ENCODE measurements at regions of chr1 and their contacts with region 1.

Region 1: DNA sequence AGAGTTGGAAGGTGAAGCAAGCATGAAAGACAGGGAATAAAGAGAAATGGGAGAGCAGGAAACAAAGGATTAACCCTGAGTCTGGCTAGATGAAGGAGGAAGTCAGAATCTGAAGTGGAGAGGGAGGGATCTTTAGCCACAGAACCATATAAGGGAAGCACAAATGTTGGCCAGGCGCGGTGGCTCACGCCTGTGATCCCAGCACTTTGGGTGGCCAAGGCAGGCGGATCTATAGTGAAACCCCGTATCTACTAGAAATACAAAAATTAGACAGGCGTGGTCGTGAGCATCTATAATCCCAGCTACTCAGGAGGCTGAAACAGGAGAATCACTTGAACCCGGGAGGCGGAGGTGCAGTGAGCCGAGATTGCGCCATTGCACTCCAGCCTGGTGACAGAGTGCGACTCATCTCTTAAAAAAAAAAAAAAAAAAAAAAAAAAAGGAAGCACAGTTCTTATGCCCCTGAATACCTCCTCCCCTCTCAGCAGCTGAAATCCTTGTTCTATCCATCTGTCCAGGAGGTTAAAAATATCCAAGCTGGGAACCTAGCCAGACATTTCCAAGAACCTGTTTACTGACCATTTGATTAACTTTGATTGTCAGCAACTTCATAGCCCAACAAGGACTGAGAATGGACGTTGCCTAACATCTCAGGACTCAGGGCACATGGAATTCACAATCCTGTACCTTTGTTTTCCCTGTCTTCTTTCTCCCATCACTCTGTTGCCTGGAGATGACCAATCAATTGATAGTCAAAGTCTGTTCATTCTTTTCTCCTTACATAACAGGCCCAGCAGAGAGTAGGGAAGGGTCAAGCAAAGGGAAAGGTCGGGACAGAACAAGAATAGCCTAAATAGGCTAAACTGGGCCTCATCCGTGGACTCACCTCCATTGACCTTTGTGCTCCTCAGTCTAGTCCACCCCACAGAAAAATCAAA is 10.6 kb downstream of the TXNIP start:
- DNase-seq: peak in 2 of 14 experiments; percentile 37 to 42
- ATAC-seq: no peak
- H3K4me3 ChIP-seq: no peak overlapping the region
- H3K4me3 Mint-ChIP-seq: peak overlapping the region; percentile 35
- H3K27ac ChIP-seq: peak overlapping the region; percentile 42 to 45
- H3K27ac Mint-ChIP-seq: no peak overlapping the region
- H3K4me1 ChIP-seq: peaks cover 83% of the 10 kb centered on the region
- H3K4me1 Mint-ChIP-seq: peaks cover 25% of the 10 kb centered on the region
- H3K27me3 ChIP-seq: no peaks in the 10 kb centered on the region
- H3K27me3 Mint-ChIP-seq: no peaks in the 10 kb centered on the region
- CTCF ChIP-seq: no peak

Region 2: GRCh38 chr1:146001709-146002108 is 15.9 kb after region 1 on chr1:
- CTCF ChIA-PET with region 1: interaction called, 151 read pairs
- POLR2A ChIA-PET with region 1: interaction called, 625 read pairs
- intact Hi-C with region 1: loop called in 1 of 2 experiments (anchors 1 kb)
- DNase-seq: no peak
- ATAC-seq: no peak
- H3K4me3 ChIP-seq: no peak overlapping the region
- H3K4me3 Mint-ChIP-seq: peak overlapping the region; percentile 72
- H3K27ac ChIP-seq: peak overlapping the region; percentile 41 to 63
- H3K27ac Mint-ChIP-seq: peak overlapping the region; percentile 95
- H3K4me1 ChIP-seq: peaks cover 86% of the 10 kb centered on the region
- H3K4me1 Mint-ChIP-seq: peaks cover 75% of the 10 kb centered on the region
- H3K27me3 ChIP-seq: no peaks in the 10 kb centered on the region
- H3K27me3 Mint-ChIP-seq: no peaks in the 10 kb centered on the region
- CTCF ChIP-seq: no peak

Region 3: DNA sequence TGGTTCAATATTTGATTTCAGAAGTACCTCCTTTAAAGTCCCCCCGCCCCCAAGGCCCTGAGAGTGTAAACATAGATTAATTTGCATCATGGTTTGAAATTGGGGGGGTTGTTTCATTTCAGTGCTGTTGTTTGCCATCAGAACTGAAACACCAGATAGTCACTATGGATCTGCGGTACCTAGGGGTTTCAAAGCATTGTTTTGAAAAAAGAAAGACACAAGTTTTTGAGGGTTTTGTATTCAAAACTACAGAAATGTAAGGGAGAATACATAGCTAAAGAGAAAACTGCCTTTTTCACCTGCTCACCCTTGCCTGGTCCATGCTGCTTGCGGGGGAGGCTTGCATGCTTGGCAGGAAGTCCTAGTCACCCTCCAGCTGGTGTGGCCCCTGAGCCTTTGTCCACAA is 1625.3 kb after region 1 on chr1:
- CTCF ChIA-PET with region 1: no interaction called
- POLR2A ChIA-PET with region 1: no interaction called
- intact Hi-C with region 1: no loop called
- DNase-seq: no peak
- ATAC-seq: no peak
- H3K4me3 ChIP-seq: no peak overlapping the region
- H3K4me3 Mint-ChIP-seq: no peak overlapping the region
- H3K27ac ChIP-seq: no peak overlapping the region
- H3K27ac Mint-ChIP-seq: no peak overlapping the region
- H3K4me1 ChIP-seq: no peaks in the 10 kb centered on the region
- H3K4me1 Mint-ChIP-seq: peaks cover 5% of the 10 kb centered on the region
- H3K27me3 ChIP-seq: no peaks in the 10 kb centered on the region
- H3K27me3 Mint-ChIP-seq: no peaks in the 10 kb centered on the region
- CTCF ChIP-seq: no peak

Measured in CD4-positive, alpha-beta T cell (primary cell).